Posterior cingulate gyrus (tissue), 11 donors: ENCODE measurements at regions of chr11 and their contacts with region 1.

Region 1: GRCh38 chr11:119728651-119729580 is at the start of gene NECTIN1:
- DNase-seq: peak; percentile 83 to 98 (median 90)

Region 2: DNA sequence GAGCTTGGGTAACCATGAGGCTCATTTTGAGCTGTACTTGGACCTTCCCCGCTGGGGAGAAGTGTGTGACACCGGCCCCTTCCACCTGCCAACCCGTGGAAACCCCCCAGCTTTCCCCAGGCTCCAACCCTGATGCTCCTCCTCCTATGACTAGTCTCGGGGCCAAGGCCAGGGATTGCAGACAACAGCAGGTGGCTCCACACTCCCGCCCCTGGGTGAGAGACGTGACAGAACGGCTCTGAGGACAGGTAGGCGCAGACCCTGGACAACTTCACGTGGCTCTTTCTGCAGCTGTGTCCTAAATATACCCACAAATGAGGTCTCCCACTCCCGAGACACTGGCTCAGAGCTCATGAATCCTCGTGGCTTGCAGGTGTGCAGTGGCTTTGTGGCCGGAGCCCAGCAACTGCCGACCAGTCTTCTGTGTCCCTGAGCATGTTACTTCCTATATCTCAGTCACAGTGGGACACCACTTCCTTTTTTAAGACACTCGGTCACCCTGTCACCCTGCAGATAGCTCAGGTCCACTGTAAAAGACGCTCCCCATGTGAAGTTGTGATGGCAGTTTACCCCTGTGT is 55.1 kb before region 1 on chr11:
- intact Hi-C with region 1: loop called (anchors 1 kb)
- DNase-seq: peak in 2 of 10 donors; percentile 59 to 84

Region 3: GRCh38 chr11:120001178-120002090 is 272.5 kb after region 1 on chr11:
- intact Hi-C with region 1: loop called (anchors 10 kb)
- DNase-seq: peak in 2 of 10 donors; percentile 37 to 40